Mammary epithelial cell (primary cell): ENCODE measurements at regions of chr17 and their contacts with region 1.

Region 1: DNA sequence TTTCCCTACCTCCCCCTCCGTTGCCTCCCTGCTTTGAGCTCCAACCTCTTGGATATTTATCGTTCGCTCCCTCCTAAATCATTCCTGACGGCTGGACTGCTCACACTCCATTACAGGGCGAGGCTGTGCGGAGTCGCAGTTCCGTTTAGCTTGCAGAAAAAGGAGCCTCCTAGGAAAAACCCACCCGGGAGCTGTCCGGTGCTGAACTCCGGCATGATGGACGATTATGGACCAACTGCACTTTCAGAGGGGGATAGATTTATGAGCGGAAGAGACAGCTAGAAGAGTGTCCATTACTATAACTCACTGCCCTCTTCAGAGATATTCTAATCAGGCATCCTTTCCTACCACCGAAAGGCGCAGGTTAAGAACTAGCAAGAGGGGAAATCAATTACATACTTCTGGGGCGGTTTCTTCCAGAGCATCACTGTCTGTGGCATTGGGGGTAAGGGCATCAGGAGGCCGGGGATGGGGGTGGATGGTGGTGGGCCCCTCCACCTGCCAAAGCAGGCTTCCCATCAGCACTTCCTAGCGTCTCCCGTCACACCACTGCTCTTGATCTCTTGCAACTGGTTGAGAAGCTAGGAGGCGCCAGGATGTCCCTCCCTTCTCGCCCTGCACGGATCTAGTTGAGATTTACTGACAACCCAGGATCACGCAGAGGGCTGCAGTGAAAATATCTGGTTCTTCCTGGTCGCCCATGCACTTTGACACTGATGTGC is 251.2 kb downstream of the ENGASE start:
- DNase-seq: no peak
- H3K4me3 ChIP-seq: no peak overlapping the region
- H3K27ac ChIP-seq: no peak overlapping the region
- H3K4me1 ChIP-seq: no peaks in the 10 kb centered on the region
- H3K27me3 ChIP-seq: peaks cover 2% of the 10 kb centered on the region
- CTCF ChIP-seq: no peak

Region 2: GRCh38 chr17:79288950-79289349 is 36.9 kb before region 1 on chr17:
- CTCF ChIA-PET with region 1: no interaction called
- dilution Hi-C with region 1: loop called (anchors 5 kb)
- in situ Hi-C with region 1: no loop called
- intact Hi-C with region 1: no loop called
- DNase-seq: no peak
- H3K4me3 ChIP-seq: no peak overlapping the region
- H3K27ac ChIP-seq: no peak overlapping the region
- H3K4me1 ChIP-seq: no peaks in the 10 kb centered on the region
- H3K27me3 ChIP-seq: peaks cover 2% of the 10 kb centered on the region
- CTCF ChIP-seq: no peak

Region 3: DNA sequence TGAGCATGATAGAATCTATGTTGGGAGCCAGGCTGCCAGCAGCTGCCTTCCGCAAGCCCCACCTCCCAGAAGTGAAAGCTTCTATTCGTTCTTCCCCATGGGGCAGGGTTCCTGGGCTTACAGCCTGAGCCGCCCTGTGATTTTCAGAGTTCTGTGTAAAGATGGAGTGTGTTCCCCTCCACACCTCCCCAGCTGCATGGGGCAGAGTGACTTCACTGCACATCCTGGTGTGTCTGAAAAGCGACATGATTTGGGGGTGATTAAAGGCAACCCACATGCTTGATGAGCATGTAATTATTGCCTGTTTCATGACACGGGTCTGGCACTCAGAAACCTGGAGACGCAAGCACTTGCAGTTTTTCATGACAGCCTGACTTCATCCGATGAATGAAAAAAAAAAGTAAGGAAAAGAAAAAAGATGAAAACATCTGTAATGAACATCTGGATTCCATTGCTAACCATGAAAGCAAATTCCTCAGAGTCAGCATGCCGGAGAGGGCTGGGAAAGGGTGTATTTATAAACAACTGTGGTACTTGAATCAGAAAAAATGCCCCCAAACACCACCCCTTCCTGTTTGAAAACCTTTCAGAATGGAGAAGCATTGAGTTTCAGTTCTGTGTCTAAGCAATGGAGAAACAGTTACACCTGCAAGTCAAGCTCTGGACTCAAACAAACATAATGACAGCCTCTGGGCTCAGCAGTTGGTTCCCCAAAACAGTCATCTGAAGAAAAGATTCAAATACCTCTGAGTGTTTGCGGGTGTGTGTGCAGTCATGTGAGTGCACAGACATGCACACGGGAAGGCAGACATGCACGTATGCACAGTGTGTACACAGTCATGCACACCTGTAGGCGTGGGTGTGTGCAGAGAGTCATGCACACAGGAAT is 14.7 kb after region 1 on chr17:
- CTCF ChIA-PET with region 1: no interaction called
- dilution Hi-C with region 1: no loop called
- in situ Hi-C with region 1: no loop called
- intact Hi-C with region 1: loop called (anchors 1 kb)
- DNase-seq: no peak
- H3K4me3 ChIP-seq: no peak overlapping the region
- H3K27ac ChIP-seq: no peak overlapping the region
- H3K4me1 ChIP-seq: peaks cover 7% of the 10 kb centered on the region
- H3K27me3 ChIP-seq: peaks cover 2% of the 10 kb centered on the region
- CTCF ChIP-seq: no peak